CD4-positive, alpha-beta T cell (primary cell): ENCODE measurements at regions of chr4 and their contacts with region 1.

Region 1: DNA sequence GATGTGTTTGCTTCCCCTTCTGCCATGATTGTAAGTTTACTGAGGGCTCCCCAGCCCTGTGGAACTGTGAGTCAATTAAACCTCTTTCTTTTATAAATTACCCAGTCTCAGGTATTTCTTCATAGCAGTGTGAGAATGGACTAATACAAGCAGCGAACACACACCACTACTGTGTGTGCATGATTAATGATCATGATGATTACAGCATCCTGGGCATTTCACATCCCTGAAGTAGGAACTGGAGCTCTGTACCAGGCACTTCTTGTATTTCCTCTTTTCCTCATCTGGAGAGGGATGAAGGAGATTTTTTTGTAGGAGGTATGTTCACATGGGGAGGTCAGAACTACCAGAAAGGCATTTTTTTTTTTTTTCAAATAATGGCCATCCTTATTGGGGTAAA is 60.8 kb downstream of the PPM1K start:
- DNase-seq: no peak
- ATAC-seq: no peak
- H3K4me3 ChIP-seq: no peak overlapping the region
- H3K4me3 Mint-ChIP-seq: no peak overlapping the region
- H3K27ac ChIP-seq: no peak overlapping the region
- H3K27ac Mint-ChIP-seq: no peak overlapping the region
- H3K4me1 ChIP-seq: no peaks in the 10 kb centered on the region
- H3K4me1 Mint-ChIP-seq: peaks cover 4% of the 10 kb centered on the region
- H3K27me3 ChIP-seq: no peaks in the 10 kb centered on the region
- H3K27me3 Mint-ChIP-seq: peaks cover 4% of the 10 kb centered on the region
- CTCF ChIP-seq: no peak

Region 2: GRCh38 chr4:88366460-88366859 is 142.9 kb after region 1 on chr4:
- CTCF ChIA-PET with region 1: no interaction called
- POLR2A ChIA-PET with region 1: no interaction called
- intact Hi-C with region 1: loop called in 1 of 2 experiments (anchors 5 kb)
- DNase-seq: no peak
- ATAC-seq: no peak
- H3K4me3 ChIP-seq: no peak overlapping the region
- H3K4me3 Mint-ChIP-seq: no peak overlapping the region
- H3K27ac ChIP-seq: no peak overlapping the region
- H3K27ac Mint-ChIP-seq: no peak overlapping the region
- H3K4me1 ChIP-seq: no peaks in the 10 kb centered on the region
- H3K4me1 Mint-ChIP-seq: no peaks in the 10 kb centered on the region
- H3K27me3 ChIP-seq: no peaks in the 10 kb centered on the region
- H3K27me3 Mint-ChIP-seq: no peaks in the 10 kb centered on the region
- CTCF ChIP-seq: no peak